MCF 10A (cell line): ENCODE measurements at regions of chr2 and their contacts with region 1.

Region 1: DNA sequence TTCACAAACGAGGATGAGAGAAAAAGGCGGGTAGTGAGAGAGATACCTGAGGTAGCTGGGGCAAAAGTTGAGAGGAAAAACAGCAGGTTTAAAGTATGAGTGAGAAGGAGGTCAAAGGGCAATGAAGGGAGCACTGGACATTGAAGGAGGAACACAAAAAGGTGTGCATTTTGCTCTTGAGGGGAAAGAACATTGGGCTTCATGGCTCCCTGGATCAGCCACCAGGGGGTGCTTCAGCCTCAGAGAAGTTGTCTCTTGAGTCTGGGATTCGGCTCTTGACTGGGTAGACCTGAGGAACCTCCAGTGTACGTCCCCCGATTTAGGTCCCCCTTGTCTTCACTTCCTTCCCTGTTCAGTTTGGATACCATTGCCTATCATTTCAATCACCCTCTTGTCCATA is 128.5 kb downstream of the RAPGEF4 start:
- DNase-seq: peak; percentile 72
- H3K4me3 Mint-ChIP-seq: no peak overlapping the region
- H3K27ac Mint-ChIP-seq: no peak overlapping the region
- H3K4me1 Mint-ChIP-seq: no peaks in the 10 kb centered on the region
- H3K27me3 Mint-ChIP-seq: peaks cover 10% of the 10 kb centered on the region
- CTCF ChIP-seq: peak; percentile 65

Region 2: DNA sequence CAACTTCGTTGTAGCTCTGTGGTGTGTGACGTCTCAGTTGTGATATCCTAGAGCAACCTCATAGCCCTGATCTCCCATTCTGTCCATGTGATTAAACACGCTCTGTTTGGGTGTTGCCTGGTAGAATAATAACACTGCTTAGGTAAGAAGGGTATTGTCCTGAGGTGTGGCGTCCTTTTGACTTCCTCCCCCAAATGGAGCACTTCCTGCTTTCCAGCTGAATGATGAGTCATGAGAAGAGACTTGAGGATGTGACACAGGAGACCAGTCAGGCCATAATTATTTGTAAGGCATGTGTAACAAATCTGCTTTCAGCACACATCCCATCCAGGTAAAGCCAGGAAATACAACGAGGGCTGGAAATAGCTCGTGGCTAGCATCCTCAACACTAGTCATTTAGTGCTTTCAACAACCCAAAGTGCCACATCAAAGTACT is 27.8 kb before region 1 on chr2:
- CTCF ChIA-PET with region 1: interaction called, 3 read pairs
- POLR2A ChIA-PET with region 1: interaction called, 10 read pairs
- intact Hi-C with region 1: no loop called
- DNase-seq: peak; percentile 81
- H3K4me3 Mint-ChIP-seq: peak overlapping the region; percentile 20
- H3K27ac Mint-ChIP-seq: peak overlapping the region; percentile 75
- H3K4me1 Mint-ChIP-seq: peaks cover 15% of the 10 kb centered on the region
- H3K27me3 Mint-ChIP-seq: no peaks in the 10 kb centered on the region
- CTCF ChIP-seq: no peak

Region 3: GRCh38 chr2:173021939-173022371 is 157.8 kb after region 1 on chr2:
- CTCF ChIA-PET with region 1: no interaction called
- POLR2A ChIA-PET with region 1: no interaction called
- intact Hi-C with region 1: loop called (anchors 1 kb)
- DNase-seq: peak; percentile 74
- H3K4me3 Mint-ChIP-seq: no peak overlapping the region
- H3K27ac Mint-ChIP-seq: no peak overlapping the region
- H3K4me1 Mint-ChIP-seq: peaks cover 6% of the 10 kb centered on the region
- H3K27me3 Mint-ChIP-seq: no peaks in the 10 kb centered on the region
- CTCF ChIP-seq: peak; percentile 58